AG04450 (cell line): ENCODE measurements at regions of chr10 and their contacts with region 1.

Region 1: DNA sequence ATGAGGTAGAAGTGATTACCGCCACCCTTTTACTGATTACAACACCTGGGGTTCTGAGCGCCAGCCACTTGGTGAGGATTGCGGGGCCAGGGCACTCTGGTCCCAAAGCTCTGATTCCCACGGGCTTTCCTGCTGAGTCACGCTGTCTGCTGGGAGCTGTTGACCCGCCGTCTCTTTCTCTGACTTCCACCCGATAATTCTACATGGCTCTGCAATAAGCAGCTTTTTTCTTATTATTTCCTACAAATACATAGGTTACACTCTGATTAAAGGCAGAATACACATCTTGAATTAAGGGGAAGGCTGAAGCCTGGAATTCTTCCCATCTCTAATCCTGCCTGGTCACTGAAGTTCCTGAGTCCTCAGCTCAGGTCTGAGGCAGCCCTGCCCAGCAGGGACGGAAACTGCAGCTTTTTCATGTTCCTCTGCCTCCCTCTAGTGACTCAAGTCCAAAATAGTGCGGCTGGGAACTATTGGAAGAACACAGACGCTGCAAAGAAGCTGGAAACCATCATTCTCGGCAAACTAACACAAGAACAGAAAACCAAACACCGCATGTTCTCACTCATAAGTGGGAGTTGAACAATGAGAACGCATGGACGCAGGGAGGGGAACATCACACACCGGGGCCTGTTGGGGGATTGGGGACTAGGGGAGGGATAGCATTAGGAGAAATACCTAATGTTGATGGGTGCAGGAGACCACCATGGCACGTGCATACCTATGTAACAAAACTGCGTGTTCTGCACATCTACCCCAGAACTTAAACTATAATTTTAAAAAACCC is 178.3 kb downstream of the PRKCQ start:
- DNase-seq: peak; percentile 84
- H3K4me3 ChIP-seq: peak overlapping the region; percentile 38
- H3K27ac ChIP-seq: peak overlapping the region; percentile 63
- H3K27me3 ChIP-seq: no peaks in the 10 kb centered on the region
- CTCF ChIP-seq: peak; percentile 77

Region 2: GRCh38 chr10:6014241-6014761 is 387.5 kb before region 1 on chr10:
- CTCF ChIA-PET with region 1: interaction called, 26 read pairs
- POLR2A ChIA-PET with region 1: no interaction called
- DNase-seq: no peak
- H3K4me3 ChIP-seq: no peak overlapping the region
- H3K27ac ChIP-seq: no peak overlapping the region
- H3K27me3 ChIP-seq: peaks cover 7% of the 10 kb centered on the region
- CTCF ChIP-seq: peak; percentile 79

Region 3: GRCh38 chr10:6108603-6109443 is 292.9 kb before region 1 on chr10:
- CTCF ChIA-PET with region 1: interaction called, 83 read pairs
- POLR2A ChIA-PET with region 1: interaction called, 5 read pairs
- DNase-seq: no peak
- H3K4me3 ChIP-seq: no peak overlapping the region
- H3K27ac ChIP-seq: no peak overlapping the region
- H3K27me3 ChIP-seq: no peaks in the 10 kb centered on the region
- CTCF ChIP-seq: peak; percentile 74

Region 4: GRCh38 chr10:6136215-6137201 is 265.2 kb before region 1 on chr10:
- CTCF ChIA-PET with region 1: interaction called, 19 read pairs
- POLR2A ChIA-PET with region 1: interaction called, 7 read pairs
- DNase-seq: peak; percentile 32
- H3K4me3 ChIP-seq: peak overlapping the region; percentile 37; the same call in 1 of the 2 replicates
- H3K27ac ChIP-seq: peak overlapping the region; percentile 73
- H3K27me3 ChIP-seq: no peaks in the 10 kb centered on the region
- CTCF ChIP-seq: 0 out of 2 replicates have a peak, but pooled peaks have one; percentile 9

Region 5: GRCh38 chr10:6171881-6172695 is 229.7 kb before region 1 on chr10:
- CTCF ChIA-PET with region 1: interaction called, 18 read pairs
- POLR2A ChIA-PET with region 1: interaction called, 4 read pairs
- DNase-seq: peak; percentile 75
- H3K4me3 ChIP-seq: peak overlapping the region; percentile 17
- H3K27ac ChIP-seq: peak overlapping the region; percentile 81
- H3K27me3 ChIP-seq: no peaks in the 10 kb centered on the region
- CTCF ChIP-seq: no peak

Region 6: GRCh38 chr10:6202684-6203330 is 198.9 kb before region 1 on chr10 and contains the start of gene PFKFB3:
- CTCF ChIA-PET with region 1: interaction called, 221 read pairs
- POLR2A ChIA-PET with region 1: interaction called, 176 read pairs
- DNase-seq: peak; percentile 91
- H3K4me3 ChIP-seq: peak within 1 kb of the TSS; percentile 80
- H3K27ac ChIP-seq: peak within 1 kb of the TSS; percentile 90
- H3K27me3 ChIP-seq: no peaks in the 10 kb centered on the region
- CTCF ChIP-seq: peak; percentile 79
- polyA plus RNA-seq, gene PFKFB3: 24.3 and 26.6 TPM in 2 replicates

Region 7: DNA sequence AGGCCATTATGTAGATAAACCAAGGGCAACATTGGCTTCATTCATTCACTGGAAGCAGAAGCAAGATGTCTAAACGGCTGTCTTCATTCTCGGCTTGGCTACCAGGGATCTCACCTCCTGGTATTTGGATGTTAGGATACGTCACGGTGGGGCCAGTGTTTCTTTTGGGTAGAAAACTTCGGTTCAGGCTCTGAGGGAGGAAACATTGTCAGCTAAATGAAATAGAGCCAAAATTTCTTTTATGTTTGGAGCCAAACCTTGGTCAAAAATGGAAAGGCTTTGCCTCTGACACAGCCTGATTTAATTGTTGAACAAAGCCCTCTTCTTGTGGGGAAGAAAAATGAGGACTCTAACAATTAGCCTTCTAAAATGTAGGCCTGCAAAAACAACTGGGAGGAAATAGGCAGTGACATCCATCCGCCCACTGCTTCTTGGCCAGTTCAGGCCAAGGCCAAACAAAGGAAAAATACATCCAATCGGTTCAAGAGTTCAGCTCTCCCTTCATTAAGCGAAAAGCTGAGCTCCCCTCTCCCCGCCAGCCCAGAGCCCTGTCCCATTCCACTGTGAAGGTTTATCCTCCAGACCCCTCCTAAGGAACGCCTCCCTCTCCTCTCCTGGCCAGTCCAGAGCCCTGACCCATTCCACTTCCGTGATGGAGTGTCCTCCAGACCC is 154.6 kb before region 1 on chr10:
- CTCF ChIA-PET with region 1: interaction called, 15 read pairs
- POLR2A ChIA-PET with region 1: interaction called, 3 read pairs
- DNase-seq: no peak
- H3K4me3 ChIP-seq: no peak overlapping the region
- H3K27ac ChIP-seq: no peak overlapping the region
- H3K27me3 ChIP-seq: no peaks in the 10 kb centered on the region
- CTCF ChIP-seq: no peak